AG04449 (cell line): ENCODE measurements at regions of chr11 and their contacts with region 1.

Region 1: DNA sequence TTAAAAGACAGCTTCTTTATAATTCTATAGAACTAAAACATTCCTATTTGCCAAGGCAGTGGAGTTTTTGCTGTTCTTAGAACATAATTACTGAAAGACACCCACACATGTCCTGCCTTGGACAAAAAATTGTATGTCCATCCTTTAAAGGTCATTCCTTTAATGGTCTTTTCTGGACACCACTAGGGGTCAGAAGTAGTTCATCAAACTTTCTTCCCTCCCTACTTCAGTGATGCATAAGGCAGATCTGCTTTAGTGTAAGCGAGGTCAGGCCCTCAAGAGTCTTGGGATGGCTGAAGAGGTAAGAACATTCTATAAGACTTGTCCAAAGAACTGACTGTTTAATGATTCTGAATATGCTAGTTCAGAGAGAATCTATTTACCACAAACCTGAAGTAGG is 4.3 kb upstream of the OR51V1 start:
- DNase-seq: peak; percentile 44
- H3K4me3 ChIP-seq: no peak overlapping the region
- CTCF ChIP-seq: peak; percentile 46

Region 2: GRCh38 chr11:5234381-5234834 is 29.6 kb after region 1 on chr11 and contains the start of gene HBD:
- CTCF ChIA-PET with region 1: no interaction called
- POLR2A ChIA-PET with region 1: no interaction called
- DNase-seq: peak; percentile 10
- H3K4me3 ChIP-seq: no peak within 1 kb of the TSS
- CTCF ChIP-seq: no peak

Region 3: GRCh38 chr11:5291207-5291838 is 86.5 kb after region 1 on chr11:
- CTCF ChIA-PET with region 1: interaction called, 10 read pairs
- POLR2A ChIA-PET with region 1: no interaction called
- DNase-seq: no peak
- H3K4me3 ChIP-seq: no peak overlapping the region
- CTCF ChIP-seq: peak; percentile 45

Region 4: GRCh38 chr11:5364214-5364613 is 159.4 kb after region 1 on chr11:
- CTCF ChIA-PET with region 1: interaction called, 12 read pairs
- POLR2A ChIA-PET with region 1: no interaction called
- DNase-seq: peak; percentile 77
- H3K4me3 ChIP-seq: no peak overlapping the region
- CTCF ChIP-seq: no peak

Region 5: GRCh38 chr11:5380740-5381342 is 176.1 kb after region 1 on chr11:
- CTCF ChIA-PET with region 1: interaction called, 27 read pairs
- POLR2A ChIA-PET with region 1: no interaction called
- DNase-seq: no peak
- H3K4me3 ChIP-seq: no peak overlapping the region
- CTCF ChIP-seq: peak; percentile 87